ENCODE measurements at regions of chr3 and their contacts with region 1.

Region 1: GRCh38 chr3:178385280-178385952 is 150.8 kb upstream of the KCNMB2 start:
- DNase-seq: peak in 3 of 9 experiments; percentile 16 to 51 (median 39)
- ATAC-seq: peak; percentile 40
- H3K4me3 ChIP-seq: no peak overlapping the region
- H3K4me3 Mint-ChIP-seq: no peak overlapping the region
- H3K27ac ChIP-seq: no peak overlapping the region
- H3K27ac Mint-ChIP-seq: no peak overlapping the region
- H3K4me1 ChIP-seq: no peaks in the 10 kb centered on the region
- H3K4me1 Mint-ChIP-seq: no peaks in the 10 kb centered on the region
- H3K27me3 ChIP-seq: no peaks in the 10 kb centered on the region
- H3K27me3 Mint-ChIP-seq: peaks cover under 1% of the 10 kb centered on the region
- CTCF ChIP-seq: peak; percentile 82

Region 2: GRCh38 chr3:176939022-176939817 is 1446.2 kb before region 1 on chr3:
- CTCF ChIA-PET with region 1: no interaction called
- POLR2A ChIA-PET with region 1: no interaction called
- intact Hi-C with region 1: loop called (anchors 5 kb)
- DNase-seq: peak in 6 of 9 experiments; percentile 4 to 60 (median 16)
- ATAC-seq: no peak
- H3K4me3 ChIP-seq: no peak overlapping the region
- H3K4me3 Mint-ChIP-seq: no peak overlapping the region
- H3K27ac ChIP-seq: no peak overlapping the region
- H3K27ac Mint-ChIP-seq: no peak overlapping the region
- H3K4me1 ChIP-seq: no peaks in the 10 kb centered on the region
- H3K4me1 Mint-ChIP-seq: no peaks in the 10 kb centered on the region
- H3K27me3 ChIP-seq: no peaks in the 10 kb centered on the region
- H3K27me3 Mint-ChIP-seq: peaks cover 4% of the 10 kb centered on the region
- CTCF ChIP-seq: peak; percentile 76